ENCODE measurements at regions of chr11 and their contacts with region 1.

Region 1: DNA sequence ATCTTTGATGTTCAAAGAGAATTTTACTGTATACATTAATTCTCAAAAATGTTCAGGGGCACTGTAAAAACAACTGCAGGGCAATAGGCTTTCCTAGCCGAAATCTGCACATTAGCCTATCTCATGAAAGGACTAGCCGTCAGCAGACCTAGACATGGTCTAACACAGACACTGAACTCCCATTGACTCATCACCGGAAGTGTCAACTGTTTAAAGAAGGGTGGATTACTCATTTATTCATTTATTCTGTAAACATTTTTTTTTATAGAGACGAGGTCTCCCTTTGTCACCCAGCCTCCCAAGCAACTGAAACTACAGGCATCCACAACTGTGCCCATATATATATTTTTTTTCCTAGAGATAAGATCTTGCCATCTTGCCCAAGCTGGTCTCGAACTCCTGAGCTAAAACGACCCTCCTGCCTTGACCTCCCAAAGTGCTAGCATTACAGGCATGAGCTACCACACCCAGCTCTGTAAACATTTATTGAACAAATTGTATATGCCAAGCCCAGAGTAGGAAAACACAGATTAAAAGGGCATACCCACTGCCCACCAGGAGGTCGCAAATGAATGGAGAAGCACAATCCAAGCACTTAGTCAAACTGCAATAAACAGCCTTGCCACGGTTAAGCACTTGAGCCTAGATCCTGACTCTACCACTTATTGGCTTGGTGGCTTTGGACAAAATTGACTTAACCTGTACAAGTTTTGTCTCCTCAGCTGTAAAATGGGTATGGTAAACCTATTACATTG is 26.6 kb downstream of the RAB30 start:
- DNase-seq: peak in 3 of 9 experiments; percentile 26 to 59 (median 57)
- ATAC-seq: peak; percentile 87
- H3K4me3 ChIP-seq: no peak overlapping the region
- H3K4me3 Mint-ChIP-seq: no peak overlapping the region
- H3K27ac ChIP-seq: no peak overlapping the region
- H3K27ac Mint-ChIP-seq: peak overlapping the region; percentile 70
- H3K4me1 ChIP-seq: peaks cover 3% of the 10 kb centered on the region
- H3K4me1 Mint-ChIP-seq: peaks cover 55% of the 10 kb centered on the region
- H3K27me3 ChIP-seq: no peaks in the 10 kb centered on the region
- H3K27me3 Mint-ChIP-seq: no peaks in the 10 kb centered on the region
- CTCF ChIP-seq: no peak

Region 2: DNA sequence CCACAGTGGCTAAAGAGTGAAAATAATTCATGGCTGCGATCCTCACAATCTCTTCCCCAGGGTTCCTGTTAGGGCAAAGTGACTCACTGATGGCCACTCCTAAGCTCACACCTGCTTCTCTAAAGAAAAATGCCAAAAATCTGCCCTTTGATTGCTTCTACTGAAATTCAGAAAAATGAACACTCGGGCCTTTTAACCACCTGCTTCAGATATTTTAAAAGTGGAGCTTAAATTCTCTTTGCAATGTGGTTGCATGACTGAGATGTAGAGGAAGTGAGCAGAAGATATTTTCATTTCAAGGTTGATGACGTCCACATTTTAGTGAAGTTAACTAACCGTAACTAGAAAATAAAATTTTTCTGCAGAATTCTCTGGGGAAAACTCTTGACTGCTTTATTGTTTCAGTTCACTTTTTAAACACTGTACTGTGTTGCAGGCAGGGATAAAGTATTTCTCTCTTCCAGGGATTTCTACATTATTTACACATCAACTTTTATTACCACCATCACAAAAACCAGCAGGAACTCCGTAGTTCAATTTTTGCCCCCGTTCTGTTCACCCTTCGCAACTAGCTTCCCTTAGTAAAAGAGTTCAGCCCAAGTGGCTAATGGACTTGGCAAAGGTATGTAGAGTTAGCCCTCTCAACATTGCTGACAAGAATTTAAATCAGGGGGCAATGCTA is 18.1 kb after region 1 on chr11:
- CTCF ChIA-PET with region 1: interaction called, 3 read pairs
- POLR2A ChIA-PET with region 1: interaction called, 5 read pairs
- intact Hi-C with region 1: loop called in 1 of 2 experiments (anchors 2 kb)
- DNase-seq: peak in 3 of 9 experiments; percentile 16 to 64 (median 45)
- ATAC-seq: peak; percentile 87
- H3K4me3 ChIP-seq: peak overlapping the region; percentile 29 to 37
- H3K4me3 Mint-ChIP-seq: peak overlapping the region; percentile 84
- H3K27ac ChIP-seq: peak overlapping the region; percentile 54 to 67
- H3K27ac Mint-ChIP-seq: peak overlapping the region; percentile 94
- H3K4me1 ChIP-seq: peaks cover 11% of the 10 kb centered on the region
- H3K4me1 Mint-ChIP-seq: peaks cover 61% of the 10 kb centered on the region
- H3K27me3 ChIP-seq: no peaks in the 10 kb centered on the region
- H3K27me3 Mint-ChIP-seq: no peaks in the 10 kb centered on the region
- CTCF ChIP-seq: no peak

Measured in CD8-positive, alpha-beta T cell (primary cell).